AG04449 (cell line): ENCODE measurements at regions of chr12 and their contacts with region 1.

Region 1: DNA sequence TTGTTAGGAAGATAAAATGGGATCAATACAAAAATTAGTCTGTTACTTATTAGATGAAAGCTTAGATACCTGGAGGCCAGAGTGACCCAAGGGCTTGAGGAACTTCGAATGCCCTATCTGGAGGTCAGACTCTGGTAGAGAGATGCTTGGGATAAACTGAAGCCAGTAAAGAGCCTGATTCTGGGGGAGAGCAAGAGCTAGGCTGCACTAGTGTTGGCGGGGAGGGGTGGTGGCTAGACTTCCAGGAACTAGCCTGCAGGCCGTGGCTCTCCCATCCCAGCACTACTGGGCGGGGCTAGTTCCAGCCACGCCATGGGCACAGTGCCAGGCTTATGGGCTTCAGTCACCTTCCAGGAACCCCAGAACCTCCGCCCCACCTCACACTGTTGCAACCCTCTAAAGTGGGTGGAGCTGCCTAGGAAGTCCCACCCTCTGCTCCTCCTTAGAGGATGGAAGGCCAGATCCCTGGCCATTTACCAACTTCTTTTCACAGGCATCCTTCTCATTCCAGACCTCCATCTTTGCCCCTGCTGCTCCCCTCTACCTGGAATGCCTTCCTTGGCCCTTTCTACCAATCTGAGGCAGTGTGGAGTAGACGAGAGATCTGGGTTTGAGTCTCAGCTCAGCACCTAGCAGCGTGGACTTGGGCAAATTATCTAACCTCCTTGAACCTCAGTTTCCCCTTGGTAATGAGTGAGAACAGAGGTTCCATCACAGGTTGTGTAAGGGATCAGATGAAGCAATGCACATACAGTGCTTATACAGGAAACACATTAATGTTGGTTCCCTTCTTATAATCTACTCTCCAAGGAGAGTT is 6.3 kb upstream of the NFE2 start:
- DNase-seq: no peak
- H3K4me3 ChIP-seq: no peak overlapping the region
- CTCF ChIP-seq: no peak

Region 2: GRCh38 chr12:54294152-54294952 is 12.8 kb before region 1 on chr12:
- CTCF ChIA-PET with region 1: interaction called, 14 read pairs
- POLR2A ChIA-PET with region 1: no interaction called
- DNase-seq: no peak
- H3K4me3 ChIP-seq: no peak overlapping the region
- CTCF ChIP-seq: peak; percentile 87